ENCODE measurements at regions of chr5 and their contacts with region 1.

Region 1: GRCh38 chr5:171913987-171914273 is 92.5 kb downstream of the FBXW11 start:
- DNase-seq: no peak
- ATAC-seq: no peak
- H3K4me3 ChIP-seq: no peak overlapping the region
- H3K27ac ChIP-seq: no peak overlapping the region
- H3K4me1 ChIP-seq: peaks cover 25% of the 10 kb centered on the region
- H3K27me3 ChIP-seq: no peaks in the 10 kb centered on the region
- CTCF ChIP-seq: no peak

Region 2: DNA sequence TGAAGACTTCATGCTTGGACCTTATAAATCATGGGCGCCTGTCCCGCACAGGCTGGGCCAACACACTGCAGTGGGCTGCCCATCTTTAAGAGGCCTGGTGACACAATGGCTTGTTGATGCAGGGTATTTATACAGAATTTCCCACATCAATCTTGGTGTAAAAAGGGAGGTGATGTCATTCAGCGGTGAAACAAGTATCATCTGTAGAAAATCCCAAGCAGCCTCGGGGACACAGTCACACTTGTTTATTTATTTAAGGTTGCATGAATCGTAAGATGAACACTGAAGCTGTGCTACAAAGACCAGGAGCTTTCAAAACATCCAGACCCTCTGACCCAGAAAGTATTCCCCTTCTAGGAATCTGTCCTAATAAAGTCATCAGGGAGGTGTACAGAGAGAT is 87.8 kb before region 1 on chr5:
- intact Hi-C with region 1: no loop called
- DNase-seq: no peak
- ATAC-seq: no peak
- H3K4me3 ChIP-seq: no peak overlapping the region
- H3K27ac ChIP-seq: no peak overlapping the region
- H3K4me1 ChIP-seq: no peaks in the 10 kb centered on the region
- H3K27me3 ChIP-seq: no peaks in the 10 kb centered on the region
- CTCF ChIP-seq: no peak

Region 3: GRCh38 chr5:172044631-172045314 is 130.8 kb after region 1 on chr5:
- intact Hi-C with region 1: loop called (anchors 10 kb)
- DNase-seq: no peak
- ATAC-seq: no peak
- H3K4me3 ChIP-seq: no peak overlapping the region
- H3K27ac ChIP-seq: no peak overlapping the region
- H3K4me1 ChIP-seq: peaks cover 4% of the 10 kb centered on the region
- H3K27me3 ChIP-seq: no peaks in the 10 kb centered on the region
- CTCF ChIP-seq: no peak